ENCODE measurements at regions of chr5 and their contacts with region 1.

Region 1: GRCh38 chr5:151051066-151051930 is 29.5 kb downstream of the TNIP1 start:
- DNase-seq: peak; percentile 84 to 91 (median 86)
- H3K4me3 ChIP-seq: no peak overlapping the region
- H3K27ac ChIP-seq: no peak overlapping the region
- H3K4me1 ChIP-seq: peaks cover 1 to 13% (median 9%) of the 10 kb centered on the region in 4 experiments
- H3K27me3 ChIP-seq: no peaks in the 10 kb centered on the region

Region 2: DNA sequence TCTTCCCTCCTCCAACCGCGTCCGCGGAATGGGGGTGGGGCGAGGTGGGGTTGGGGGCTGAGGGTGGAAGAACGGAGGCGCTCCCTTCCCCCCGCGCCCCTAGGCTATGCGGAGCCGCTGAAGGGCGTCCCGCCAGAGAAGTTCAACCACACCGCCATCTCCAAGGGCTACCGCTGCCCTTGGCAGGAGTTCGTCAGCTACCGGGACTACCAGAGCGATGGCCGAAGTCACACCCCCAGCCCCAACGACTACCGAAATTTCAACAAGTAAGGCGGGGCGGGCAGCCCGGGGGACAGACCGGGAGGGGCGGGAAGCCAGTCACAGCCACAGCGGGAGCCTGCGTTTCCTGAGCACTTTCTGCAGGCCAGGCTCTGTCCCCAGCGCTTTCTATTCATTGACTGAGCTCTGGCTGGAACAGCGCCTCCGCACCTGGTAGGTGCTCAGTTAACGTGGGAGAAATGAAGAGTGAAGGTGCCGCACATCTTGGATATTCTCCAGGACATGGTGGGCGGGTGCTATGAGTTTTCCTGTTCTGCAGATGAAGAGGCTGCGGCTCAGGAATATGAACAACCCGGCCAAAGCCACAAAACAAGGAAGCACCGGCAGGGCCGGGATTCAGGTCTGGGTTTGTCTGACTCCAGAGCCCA is 378.9 kb before region 1 on chr5:
- CTCF ChIA-PET with region 1: no interaction called
- POLR2A ChIA-PET with region 1: no interaction called
- DNase-seq: peak; percentile 59 to 85 (median 78)
- H3K4me3 ChIP-seq: peak overlapping the region; percentile 52 to 87 (median 72)
- H3K27ac ChIP-seq: peak overlapping the region in 1 of 2 experiments; percentile 59
- H3K4me1 ChIP-seq: peaks cover 0 to 33% (median 26%) of the 10 kb centered on the region in 4 experiments
- H3K27me3 ChIP-seq: no peaks in the 10 kb centered on the region

Region 3: DNA sequence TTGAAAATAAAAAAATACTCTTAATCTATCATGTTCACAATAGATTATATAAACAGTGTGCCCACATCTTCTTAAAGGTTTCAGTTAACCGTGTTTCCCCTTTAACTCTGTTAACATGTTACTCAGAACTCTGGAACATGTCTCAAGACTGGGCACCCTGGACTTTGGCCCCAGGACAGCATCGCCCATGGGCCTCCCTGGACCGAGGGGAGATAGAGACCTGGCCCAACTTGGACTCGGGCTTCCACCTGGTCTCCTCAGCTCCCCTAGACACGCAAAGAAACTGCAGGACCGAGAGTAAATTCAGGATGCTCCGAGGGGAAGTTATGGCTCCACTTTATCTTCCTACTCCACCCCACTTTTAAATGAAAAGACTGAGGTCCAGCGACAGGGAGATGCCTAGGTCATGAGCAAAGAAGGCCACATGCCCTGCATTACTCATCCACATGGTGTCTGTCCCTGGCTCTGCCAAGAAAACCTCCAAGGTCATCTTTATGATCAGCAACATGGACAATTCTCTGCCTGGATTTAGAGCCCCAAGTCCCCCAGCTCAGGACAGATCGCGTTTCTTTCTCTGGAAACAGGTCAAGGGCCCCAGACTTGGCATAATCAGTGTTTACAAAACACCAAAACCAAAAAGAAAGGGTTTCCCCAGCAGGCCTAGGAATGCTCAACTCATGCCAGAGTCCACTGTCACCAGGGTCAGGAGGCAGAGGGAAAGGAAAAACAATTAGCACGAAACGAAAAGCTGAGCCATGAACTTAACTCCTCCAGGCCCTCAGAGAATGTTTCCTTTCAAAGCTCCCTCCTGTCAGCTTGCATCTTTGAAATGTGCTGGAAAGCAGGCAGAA is 13.5 kb before region 1 on chr5:
- CTCF ChIA-PET with region 1: interaction called, 93 read pairs
- POLR2A ChIA-PET with region 1: no interaction called
- DNase-seq: no peak
- H3K4me3 ChIP-seq: no peak overlapping the region
- H3K27ac ChIP-seq: no peak overlapping the region
- H3K4me1 ChIP-seq: no peaks in the 10 kb centered on the region
- H3K27me3 ChIP-seq: no peaks in the 10 kb centered on the region

Region 4: DNA sequence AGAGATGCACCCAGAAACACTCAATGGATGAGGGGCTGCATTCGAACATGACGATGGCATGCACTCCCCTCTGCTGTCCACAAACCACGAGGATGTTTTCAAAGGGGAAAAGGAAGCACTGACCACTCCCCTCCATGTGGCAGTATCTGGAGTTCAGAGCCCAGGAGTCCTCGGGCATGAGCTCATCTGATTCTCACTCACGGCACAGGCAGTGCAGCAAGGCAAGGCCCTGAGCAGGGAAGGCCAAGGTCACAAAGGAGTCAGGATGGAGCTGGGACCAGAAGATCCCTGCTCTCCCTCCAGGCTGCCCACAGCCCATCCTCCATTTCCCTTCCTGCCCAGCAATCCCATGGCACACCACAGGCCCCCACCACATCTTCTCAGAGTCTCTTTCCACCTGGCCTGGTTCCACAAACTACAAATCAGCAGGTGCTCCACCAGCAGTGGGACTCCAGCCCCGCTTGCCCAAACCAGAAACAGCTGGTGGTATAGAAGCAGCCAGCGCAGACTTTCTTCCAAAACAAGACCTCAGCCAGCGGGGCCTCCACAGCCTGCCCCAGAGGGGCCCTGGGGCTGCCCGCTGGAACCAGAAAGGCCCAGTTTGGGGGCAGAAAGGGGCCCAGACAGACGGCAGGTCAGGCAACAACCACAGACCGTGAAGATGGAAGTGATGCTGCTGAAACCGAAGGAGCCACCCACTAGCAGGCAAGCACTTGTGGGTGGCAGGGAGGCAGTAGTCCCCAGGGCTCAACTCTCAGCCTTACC is 17.3 kb after region 1 on chr5:
- CTCF ChIA-PET with region 1: interaction called, 75 read pairs
- POLR2A ChIA-PET with region 1: interaction called, 3 read pairs
- DNase-seq: peak in 2 of 3 donors; percentile 73 to 79
- H3K4me3 ChIP-seq: peak overlapping the region in 3 of 7 experiments; percentile 10 to 46 (median 21)
- H3K27ac ChIP-seq: peak overlapping the region in 1 of 2 experiments; percentile 72
- H3K4me1 ChIP-seq: peaks cover 9 to 48% (median 36%) of the 10 kb centered on the region in 4 experiments
- H3K27me3 ChIP-seq: no peaks in the 10 kb centered on the region

Region 5: DNA sequence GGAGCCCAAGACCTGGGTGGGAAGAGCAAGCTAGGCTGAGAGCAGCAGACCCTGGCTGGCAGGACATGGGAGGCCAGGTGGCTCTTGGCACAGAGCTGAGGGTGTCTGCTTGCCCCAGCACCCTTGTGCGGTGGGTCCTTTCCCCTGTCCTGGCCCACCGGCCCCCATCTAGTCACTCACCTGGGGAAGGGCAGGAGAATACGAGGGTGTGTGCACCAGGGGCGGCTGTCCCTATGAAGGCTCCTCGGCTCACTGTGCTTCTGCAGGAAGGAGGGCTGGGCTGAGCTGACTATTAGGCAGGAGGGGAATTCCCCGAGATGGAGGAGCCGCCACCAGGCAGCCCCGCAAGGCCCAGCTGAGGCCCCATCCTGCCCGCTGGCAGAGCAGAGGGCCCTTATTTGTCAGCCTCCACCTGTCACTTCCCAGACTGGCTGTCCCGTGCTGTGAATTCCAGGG is 35.6 kb after region 1 on chr5:
- CTCF ChIA-PET with region 1: interaction called, 1,757 read pairs
- POLR2A ChIA-PET with region 1: interaction called, 3 read pairs
- DNase-seq: peak in 2 of 3 donors; percentile 80 to 83
- H3K4me3 ChIP-seq: peak overlapping the region in 6 of 7 experiments; percentile 9 to 73 (median 26)
- H3K27ac ChIP-seq: peak overlapping the region in 1 of 2 experiments; percentile 25
- H3K4me1 ChIP-seq: peaks cover 8 to 52% (median 47%) of the 10 kb centered on the region in 4 experiments
- H3K27me3 ChIP-seq: no peaks in the 10 kb centered on the region

Measured in common myeloid progenitor, CD34-positive (primary cell).